ENCODE measurements at regions of chr20 and their contacts with region 1.

Region 1: DNA sequence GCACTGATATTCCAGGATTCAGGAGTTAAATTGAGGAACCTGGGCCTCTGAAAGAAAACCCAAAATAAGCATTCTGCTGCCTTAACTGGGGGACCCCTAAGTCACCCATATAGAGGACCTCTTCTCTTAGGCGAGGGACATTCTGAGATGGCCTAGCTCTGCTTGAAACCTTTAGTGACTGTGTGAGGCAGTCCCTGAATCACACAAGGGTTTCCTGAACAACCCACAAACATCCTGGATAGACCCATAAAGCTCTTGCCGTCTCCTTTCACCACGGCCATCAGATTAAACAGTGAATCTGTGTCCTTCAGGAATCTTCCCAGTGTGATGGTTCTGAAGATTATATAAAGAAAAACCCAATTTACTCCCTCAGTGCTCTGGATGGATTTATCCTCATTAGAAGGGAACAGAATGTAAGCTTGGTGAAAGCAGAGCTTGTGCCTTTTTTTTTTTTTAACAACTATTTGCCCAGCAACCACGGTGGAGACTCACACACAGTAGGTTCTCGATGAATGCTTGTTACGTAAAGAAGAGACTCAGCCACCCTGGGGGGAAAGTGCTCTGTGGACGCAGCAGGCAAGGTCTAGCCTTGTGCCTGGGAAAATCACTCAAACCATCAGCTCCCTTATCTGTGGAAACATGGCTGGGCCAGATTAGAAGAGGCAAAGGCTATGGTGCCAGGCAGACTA is 39.1 kb upstream of the SIRPG start:
- DNase-seq: peak in 2 of 9 experiments; percentile 34 to 56
- ATAC-seq: peak; percentile 42
- H3K4me3 ChIP-seq: no peak overlapping the region
- H3K4me3 Mint-ChIP-seq: peak overlapping the region; percentile 50
- H3K27ac ChIP-seq: peak overlapping the region in 1 of 2 experiments; percentile 55
- H3K27ac Mint-ChIP-seq: peak overlapping the region; percentile 58
- H3K4me1 ChIP-seq: peaks cover 20% of the 10 kb centered on the region
- H3K4me1 Mint-ChIP-seq: peaks cover 27% of the 10 kb centered on the region
- H3K27me3 ChIP-seq: no peaks in the 10 kb centered on the region
- H3K27me3 Mint-ChIP-seq: no peaks in the 10 kb centered on the region
- CTCF ChIP-seq: no peak

Region 2: GRCh38 chr20:1707588-1708449 is 11.2 kb after region 1 on chr20:
- CTCF ChIA-PET with region 1: no interaction called
- POLR2A ChIA-PET with region 1: interaction called, 6 read pairs
- intact Hi-C with region 1: loop called in 1 of 2 experiments (anchors 1 kb)
- DNase-seq: peak in 1 of 9 experiments; percentile 32
- ATAC-seq: peak; percentile 54
- H3K4me3 ChIP-seq: no peak overlapping the region
- H3K4me3 Mint-ChIP-seq: peak overlapping the region; percentile 44
- H3K27ac ChIP-seq: no peak overlapping the region
- H3K27ac Mint-ChIP-seq: peak overlapping the region; percentile 89
- H3K4me1 ChIP-seq: peaks cover 18% of the 10 kb centered on the region
- H3K4me1 Mint-ChIP-seq: peaks cover 25% of the 10 kb centered on the region
- H3K27me3 ChIP-seq: no peaks in the 10 kb centered on the region
- H3K27me3 Mint-ChIP-seq: no peaks in the 10 kb centered on the region
- CTCF ChIP-seq: no peak